Naive thymus-derived CD4-positive, alpha-beta T cell (primary cell): ENCODE measurements at regions of chr4 and their contacts with region 1.

Region 1: DNA sequence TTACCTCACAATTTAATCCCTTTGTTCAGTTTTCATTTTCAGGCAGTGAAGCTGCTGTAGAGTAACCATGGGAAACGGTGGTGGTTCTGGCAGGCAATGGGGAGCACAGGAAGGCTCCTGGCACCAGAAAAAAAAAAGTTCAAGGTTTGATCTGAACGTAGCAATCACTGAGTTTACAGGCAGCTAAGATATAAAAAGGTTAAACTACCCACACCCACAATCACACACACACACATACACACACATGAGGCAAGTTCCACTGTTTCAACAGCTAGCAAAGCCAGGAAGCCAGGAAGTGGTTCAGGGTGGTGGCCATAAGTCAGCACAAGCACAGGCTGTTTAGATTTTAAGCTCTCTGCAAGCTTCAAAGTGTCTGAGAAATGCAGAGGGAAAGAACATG is at the start of gene SULT1B1:
- DNase-seq: peak in 8 of 9 donors; percentile 40 to 92 (median 86)
- ATAC-seq: peak; percentile 98
- H3K4me3 ChIP-seq: peak within 1 kb of the TSS; percentile 62
- H3K4me3 Mint-ChIP-seq: peak within 1 kb of the TSS; percentile 85 to 99 (median 92)
- H3K27ac ChIP-seq: peak within 1 kb of the TSS; percentile 59
- H3K27ac Mint-ChIP-seq: peak within 1 kb of the TSS; percentile 90 to 97 (median 95)
- H3K4me1 ChIP-seq: peaks cover 0 to 37% of the 10 kb centered on the region in 2 donors
- H3K4me1 Mint-ChIP-seq: peaks cover 40 to 79% (median 72%) of the 10 kb centered on the region in 7 donors
- H3K27me3 ChIP-seq: no peaks in the 10 kb centered on the region
- H3K27me3 Mint-ChIP-seq: no peaks in the 10 kb centered on the region
- total RNA-seq, gene SULT1B1: 8.2 to 32.0 (median 17.2) TPM

Region 2: DNA sequence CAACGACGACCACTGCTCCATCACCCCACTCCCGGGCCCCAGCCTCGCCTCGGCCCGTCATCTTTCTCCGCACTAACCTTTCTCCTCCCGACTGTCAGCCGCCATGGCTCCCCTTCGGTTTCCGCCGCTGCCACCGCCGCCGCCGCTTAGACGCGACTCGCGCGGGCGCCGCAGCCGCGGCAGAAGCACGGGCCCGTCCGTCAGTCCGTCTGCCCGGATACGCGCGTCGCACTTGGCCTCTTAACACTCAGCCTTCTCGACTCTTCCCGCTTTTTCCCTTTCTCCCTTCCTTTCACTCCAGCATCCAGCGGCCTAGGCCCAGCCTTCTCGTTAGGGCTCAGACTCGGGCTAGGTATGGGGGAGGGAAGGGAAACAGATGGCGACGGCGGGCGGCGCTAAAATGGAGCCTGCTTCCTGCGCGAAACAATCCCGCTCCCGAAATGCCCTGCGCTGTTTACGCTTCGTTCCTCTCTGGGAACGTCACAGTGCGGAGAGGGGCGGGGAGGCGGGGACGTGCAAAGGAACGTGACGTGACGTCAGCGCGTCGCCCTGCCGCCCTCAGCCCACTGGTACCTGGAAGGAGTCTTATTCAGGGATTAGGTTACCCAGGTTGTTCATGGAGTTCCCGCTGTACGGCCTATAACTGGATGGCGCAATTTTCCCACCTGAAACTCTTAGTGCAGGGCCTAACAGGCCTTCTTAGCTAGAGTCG is 1410.7 kb before region 1 on chr4 and contains the start of gene YTHDC1:
- CTCF ChIA-PET with region 1: no interaction called
- POLR2A ChIA-PET with region 1: no interaction called
- intact Hi-C with region 1: loop called (anchors 5 kb)
- DNase-seq: peak; percentile 84 to 97 (median 95)
- ATAC-seq: peak; percentile 97
- H3K4me3 ChIP-seq: peak within 1 kb of the TSS; percentile 100
- H3K4me3 Mint-ChIP-seq: peak within 1 kb of the TSS; percentile 94 to 100 (median 98)
- H3K27ac ChIP-seq: peak within 1 kb of the TSS; percentile 96
- H3K27ac Mint-ChIP-seq: peak within 1 kb of the TSS; percentile 97 to 100 (median 100)
- H3K4me1 ChIP-seq: peaks cover 26 to 35% of the 10 kb centered on the region in 2 donors
- H3K4me1 Mint-ChIP-seq: peaks cover 16 to 48% (median 41%) of the 10 kb centered on the region in 7 donors
- H3K27me3 ChIP-seq: no peaks in the 10 kb centered on the region
- H3K27me3 Mint-ChIP-seq: peaks cover 0 to 20% (median 0%) of the 10 kb centered on the region in 5 donors
- total RNA-seq, gene YTHDC1: 99.4 to 254 (median 219) TPM

Region 3: DNA sequence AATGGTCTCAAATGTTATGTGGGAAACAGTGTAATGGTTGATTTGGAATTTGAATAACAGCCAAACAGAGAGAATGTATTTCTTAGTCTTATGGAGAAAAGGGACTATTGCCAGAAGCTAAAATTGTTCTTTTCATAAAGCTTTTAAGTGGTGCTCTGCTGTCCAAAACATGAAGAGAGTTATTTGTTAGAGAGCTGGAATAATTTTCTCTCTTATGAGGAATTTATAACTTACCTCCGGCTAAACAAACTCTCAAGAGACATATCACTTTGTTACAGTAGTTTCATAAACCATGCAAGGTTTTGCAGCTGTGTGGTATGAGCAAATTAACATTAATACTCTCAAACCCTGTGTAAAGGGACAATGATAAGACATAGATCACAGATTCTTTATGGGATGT is 28.6 kb before region 1 on chr4:
- CTCF ChIA-PET with region 1: no interaction called
- POLR2A ChIA-PET with region 1: interaction called, 5 read pairs
- intact Hi-C with region 1: loop called in 1 of 2 experiments (anchors 2 kb)
- DNase-seq: no peak
- ATAC-seq: no peak
- H3K4me3 ChIP-seq: no peak overlapping the region
- H3K4me3 Mint-ChIP-seq: no peak overlapping the region
- H3K27ac ChIP-seq: no peak overlapping the region
- H3K27ac Mint-ChIP-seq: peak overlapping the region in 1 of 9 donors; percentile 45
- H3K4me1 ChIP-seq: no peaks in the 10 kb centered on the region
- H3K4me1 Mint-ChIP-seq: peaks cover 0 to 40% (median 13%) of the 10 kb centered on the region in 7 donors
- H3K27me3 ChIP-seq: no peaks in the 10 kb centered on the region
- H3K27me3 Mint-ChIP-seq: no peaks in the 10 kb centered on the region

Region 4: DNA sequence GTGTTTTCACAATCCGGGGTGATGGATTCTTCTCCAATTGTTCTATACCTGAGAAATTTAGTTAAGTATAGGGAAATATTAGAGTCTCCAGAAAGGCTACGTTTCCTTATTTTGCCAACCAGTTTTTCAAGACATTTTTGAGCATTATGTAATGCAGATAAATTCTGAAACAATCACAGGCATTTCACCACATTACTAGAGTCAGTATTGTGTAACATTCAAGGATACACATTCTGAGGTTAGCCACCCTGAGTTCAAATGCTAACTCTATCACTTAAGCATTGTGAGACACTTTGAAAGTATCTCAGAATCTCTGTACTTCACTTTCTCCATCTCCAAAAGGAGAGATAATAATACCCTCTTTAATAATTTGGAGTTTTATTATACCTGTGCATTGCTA is 10.7 kb before region 1 on chr4:
- CTCF ChIA-PET with region 1: no interaction called
- POLR2A ChIA-PET with region 1: interaction called, 5 read pairs
- intact Hi-C with region 1: loop called in 1 of 2 experiments (anchors 1 kb)
- DNase-seq: no peak
- ATAC-seq: peak; percentile 27
- H3K4me3 ChIP-seq: no peak overlapping the region
- H3K4me3 Mint-ChIP-seq: no peak overlapping the region
- H3K27ac ChIP-seq: no peak overlapping the region
- H3K27ac Mint-ChIP-seq: no peak overlapping the region
- H3K4me1 ChIP-seq: no peaks in the 10 kb centered on the region
- H3K4me1 Mint-ChIP-seq: peaks cover 0 to 46% (median 23%) of the 10 kb centered on the region in 7 donors
- H3K27me3 ChIP-seq: no peaks in the 10 kb centered on the region
- H3K27me3 Mint-ChIP-seq: no peaks in the 10 kb centered on the region

Region 5: GRCh38 chr4:69823481-69824186 is 63.2 kb after region 1 on chr4:
- CTCF ChIA-PET with region 1: interaction called, 11 read pairs
- POLR2A ChIA-PET with region 1: interaction called, 5 read pairs
- intact Hi-C with region 1: loop called (anchors 1 to 2 kb)
- DNase-seq: peak in 7 of 9 donors; percentile 34 to 71 (median 65)
- ATAC-seq: peak; percentile 96
- H3K4me3 ChIP-seq: no peak overlapping the region
- H3K4me3 Mint-ChIP-seq: peak overlapping the region in 2 of 10 donors; percentile 47 to 50
- H3K27ac ChIP-seq: no peak overlapping the region
- H3K27ac Mint-ChIP-seq: peak overlapping the region in 5 of 9 donors; percentile 6 to 75 (median 23)
- H3K4me1 ChIP-seq: peaks cover 0 to 4% of the 10 kb centered on the region in 2 donors
- H3K4me1 Mint-ChIP-seq: peaks cover 4 to 21% (median 10%) of the 10 kb centered on the region in 7 donors
- H3K27me3 ChIP-seq: no peaks in the 10 kb centered on the region
- H3K27me3 Mint-ChIP-seq: no peaks in the 10 kb centered on the region

Region 6: GRCh38 chr4:70425306-70425705 is 664.9 kb after region 1 on chr4:
- CTCF ChIA-PET with region 1: no interaction called
- POLR2A ChIA-PET with region 1: no interaction called
- intact Hi-C with region 1: no loop called
- DNase-seq: no peak
- ATAC-seq: no peak
- H3K4me3 ChIP-seq: no peak overlapping the region
- H3K4me3 Mint-ChIP-seq: no peak overlapping the region
- H3K27ac ChIP-seq: no peak overlapping the region
- H3K27ac Mint-ChIP-seq: no peak overlapping the region
- H3K4me1 ChIP-seq: no peaks in the 10 kb centered on the region
- H3K4me1 Mint-ChIP-seq: no peaks in the 10 kb centered on the region
- H3K27me3 ChIP-seq: no peaks in the 10 kb centered on the region
- H3K27me3 Mint-ChIP-seq: peaks cover 0 to 11% (median 6%) of the 10 kb centered on the region in 5 donors

Region 7: GRCh38 chr4:70687821-70688794 is 927.7 kb after region 1 on chr4 and contains the start of gene UTP3:
- CTCF ChIA-PET with region 1: no interaction called
- POLR2A ChIA-PET with region 1: interaction called, 3 read pairs
- intact Hi-C with region 1: loop called in 1 of 2 experiments (anchors 5 kb)
- DNase-seq: peak; percentile 85 to 95 (median 92)
- ATAC-seq: peak; percentile 95
- H3K4me3 ChIP-seq: peak within 1 kb of the TSS; percentile 69
- H3K4me3 Mint-ChIP-seq: peak within 1 kb of the TSS; percentile 93 to 99 (median 98)
- H3K27ac ChIP-seq: peak within 1 kb of the TSS; percentile 94
- H3K27ac Mint-ChIP-seq: peak within 1 kb of the TSS; percentile 93 to 100 (median 99)
- H3K4me1 ChIP-seq: peaks cover 7 to 13% of the 10 kb centered on the region in 2 donors
- H3K4me1 Mint-ChIP-seq: peaks cover 12 to 48% (median 46%) of the 10 kb centered on the region in 7 donors
- H3K27me3 ChIP-seq: no peaks in the 10 kb centered on the region
- H3K27me3 Mint-ChIP-seq: no peaks in the 10 kb centered on the region
- total RNA-seq, gene UTP3: 17.4 to 44.9 (median 36.5) TPM